B cell (primary cell): ENCODE measurements at regions of chr3 and their contacts with region 1.

Region 1: DNA sequence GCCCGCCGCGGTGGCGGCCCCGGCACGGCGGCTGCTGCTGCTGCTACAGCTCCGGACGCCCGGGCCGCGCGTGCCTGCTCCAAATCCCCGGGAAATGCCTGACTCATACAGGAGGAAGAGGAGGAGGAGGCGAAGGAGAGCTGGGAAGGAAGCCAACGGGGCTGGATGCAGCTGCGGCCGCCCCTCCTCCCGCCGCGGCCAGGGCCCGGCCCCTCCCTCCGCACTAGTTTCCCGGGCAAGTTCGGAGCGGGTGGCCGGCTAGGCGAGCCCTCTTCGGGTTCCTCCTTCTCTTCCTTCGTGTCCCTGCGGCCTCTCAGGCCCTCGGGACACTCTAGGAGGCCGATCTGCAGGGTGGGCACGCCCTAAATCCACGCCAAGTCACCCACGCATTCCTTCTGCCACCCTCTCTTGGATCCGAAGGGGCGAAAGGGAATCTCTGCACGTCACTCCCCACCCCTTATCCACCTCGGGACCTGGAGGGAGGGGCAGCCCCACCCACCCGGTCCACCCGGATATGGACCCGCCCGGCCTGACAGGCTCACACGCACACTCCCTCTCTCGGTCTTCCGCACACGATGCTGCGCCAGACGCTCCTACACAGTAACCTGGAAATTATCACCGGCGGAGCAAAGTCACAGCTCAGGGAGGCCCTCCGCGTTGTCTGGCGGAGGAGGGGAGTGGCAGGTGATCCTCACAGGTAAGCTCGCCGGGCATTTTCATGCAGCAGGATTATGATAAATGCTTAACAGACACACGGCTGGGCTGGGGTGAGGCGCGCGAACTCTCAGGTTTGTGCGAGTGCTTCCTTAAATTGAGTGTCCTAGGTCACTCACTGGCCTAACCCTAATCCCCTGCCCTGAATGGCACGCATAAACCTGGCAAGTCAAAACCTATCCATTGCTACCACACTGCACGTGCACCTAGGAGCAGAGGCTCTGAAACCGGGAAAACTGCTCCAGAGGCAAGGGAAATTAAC is at the starts of genes OSBPL10 and ZNF860:
- DNase-seq: peak; percentile 75
- ATAC-seq: peak; percentile 64
- H3K4me3 ChIP-seq: peak within 1 kb of the TSS; percentile 75 to 95 (median 88)
- H3K4me3 Mint-ChIP-seq: peak within 1 kb of the TSS; percentile 99
- H3K27ac ChIP-seq: peak within 1 kb of the TSS; percentile 70 to 84
- H3K27ac Mint-ChIP-seq: peak within 1 kb of the TSS; percentile 98
- H3K4me1 ChIP-seq: peaks cover 75% of the 10 kb centered on the region in 2 donors
- H3K4me1 Mint-ChIP-seq: peaks cover 78% of the 10 kb centered on the region
- H3K27me3 ChIP-seq: no peaks in the 10 kb centered on the region
- H3K27me3 Mint-ChIP-seq: no peaks in the 10 kb centered on the region
- CTCF ChIP-seq: no peak
- total RNA-seq, gene OSBPL10: 310 and 317 TPM in 2 replicates
- total RNA-seq, gene ZNF860: 41.4 and 45.9 TPM in 2 replicates

Region 2: GRCh38 chr3:31567036-31567435 is 414.5 kb before region 1 on chr3:
- CTCF ChIA-PET with region 1: no interaction called
- POLR2A ChIA-PET with region 1: no interaction called
- intact Hi-C with region 1: no loop called
- DNase-seq: peak; percentile 33
- ATAC-seq: peak; percentile 49
- H3K4me3 ChIP-seq: no peak overlapping the region
- H3K4me3 Mint-ChIP-seq: no peak overlapping the region
- H3K27ac ChIP-seq: no peak overlapping the region
- H3K27ac Mint-ChIP-seq: no peak overlapping the region
- H3K4me1 ChIP-seq: peaks cover 19 to 51% of the 10 kb centered on the region in 2 donors
- H3K4me1 Mint-ChIP-seq: peaks cover 77% of the 10 kb centered on the region
- H3K27me3 ChIP-seq: no peaks in the 10 kb centered on the region
- H3K27me3 Mint-ChIP-seq: no peaks in the 10 kb centered on the region
- CTCF ChIP-seq: peak; percentile 68

Region 3: GRCh38 chr3:31858439-31858838 is 123.1 kb before region 1 on chr3:
- CTCF ChIA-PET with region 1: interaction called, 12 read pairs
- POLR2A ChIA-PET with region 1: no interaction called
- intact Hi-C with region 1: loop called (anchors 1 kb)
- DNase-seq: peak; percentile 48
- ATAC-seq: peak; percentile 66
- H3K4me3 ChIP-seq: no peak overlapping the region
- H3K4me3 Mint-ChIP-seq: no peak overlapping the region
- H3K27ac ChIP-seq: peak overlapping the region in 1 of 2 donors; percentile 34
- H3K27ac Mint-ChIP-seq: peak overlapping the region; percentile 53
- H3K4me1 ChIP-seq: peaks cover 49 to 56% of the 10 kb centered on the region in 2 donors
- H3K4me1 Mint-ChIP-seq: peaks cover 65% of the 10 kb centered on the region
- H3K27me3 ChIP-seq: no peaks in the 10 kb centered on the region
- H3K27me3 Mint-ChIP-seq: no peaks in the 10 kb centered on the region
- CTCF ChIP-seq: peak; percentile 59

Region 4: DNA sequence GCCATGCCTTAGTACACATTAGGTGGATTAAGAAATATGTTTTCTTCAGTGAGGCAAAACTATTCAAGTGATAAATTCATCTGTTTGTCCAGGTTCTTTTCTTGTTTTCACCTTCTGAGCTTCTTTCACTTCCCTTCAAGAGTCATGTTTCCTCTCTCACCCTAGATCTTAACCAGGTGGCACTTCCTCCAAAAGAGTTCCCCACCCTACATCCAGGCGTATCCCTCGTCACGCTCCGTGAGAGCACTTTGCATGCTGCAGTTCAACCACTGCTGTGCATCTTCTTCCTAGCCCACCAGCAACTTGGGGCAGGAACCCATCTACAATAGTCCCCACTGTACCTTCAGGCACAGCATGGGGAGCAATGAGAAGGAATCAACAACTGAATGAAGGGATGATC is 29.3 kb before region 1 on chr3:
- CTCF ChIA-PET with region 1: interaction called, 9 read pairs
- POLR2A ChIA-PET with region 1: interaction called, 8 read pairs
- intact Hi-C with region 1: loop called (anchors 2 kb)
- DNase-seq: peak; percentile 90
- ATAC-seq: peak; percentile 84
- H3K4me3 ChIP-seq: peak overlapping the region in 2 of 5 experiments; percentile 35 to 52
- H3K4me3 Mint-ChIP-seq: peak overlapping the region; percentile 80
- H3K27ac ChIP-seq: peak overlapping the region; percentile 88
- H3K27ac Mint-ChIP-seq: peak overlapping the region; percentile 96
- H3K4me1 ChIP-seq: peaks cover 88 to 90% of the 10 kb centered on the region in 2 donors
- H3K4me1 Mint-ChIP-seq: peaks cover 88% of the 10 kb centered on the region
- H3K27me3 ChIP-seq: no peaks in the 10 kb centered on the region
- H3K27me3 Mint-ChIP-seq: no peaks in the 10 kb centered on the region
- CTCF ChIP-seq: no peak

Region 5: GRCh38 chr3:31999907-32000439 is 18.5 kb after region 1 on chr3:
- CTCF ChIA-PET with region 1: interaction called, 4 read pairs
- POLR2A ChIA-PET with region 1: interaction called, 11 read pairs
- intact Hi-C with region 1: loop called (anchors 2 kb)
- DNase-seq: peak; percentile 27
- ATAC-seq: peak; percentile 88
- H3K4me3 ChIP-seq: peak overlapping the region in 1 of 5 experiments; percentile 1
- H3K4me3 Mint-ChIP-seq: peak overlapping the region; percentile 83
- H3K27ac ChIP-seq: peak overlapping the region; percentile 59 to 85
- H3K27ac Mint-ChIP-seq: peak overlapping the region; percentile 98
- H3K4me1 ChIP-seq: peaks cover 39% of the 10 kb centered on the region in 2 donors
- H3K4me1 Mint-ChIP-seq: peaks cover 66% of the 10 kb centered on the region
- H3K27me3 ChIP-seq: no peaks in the 10 kb centered on the region
- H3K27me3 Mint-ChIP-seq: no peaks in the 10 kb centered on the region
- CTCF ChIP-seq: no peak

Region 6: GRCh38 chr3:32106280-32106928 is 124.9 kb after region 1 on chr3 and contains the start of gene GPD1L:
- CTCF ChIA-PET with region 1: no interaction called
- POLR2A ChIA-PET with region 1: interaction called, 3 read pairs
- intact Hi-C with region 1: loop called (anchors 1 kb)
- DNase-seq: peak; percentile 94
- ATAC-seq: peak; percentile 99
- H3K4me3 ChIP-seq: peak within 1 kb of the TSS; percentile 46 to 79 (median 75)
- H3K4me3 Mint-ChIP-seq: peak within 1 kb of the TSS; percentile 94
- H3K27ac ChIP-seq: no peak within 1 kb of the TSS
- H3K27ac Mint-ChIP-seq: peak within 1 kb of the TSS; percentile 88
- H3K4me1 ChIP-seq: peaks cover 11 to 14% of the 10 kb centered on the region in 2 donors
- H3K4me1 Mint-ChIP-seq: peaks cover 15% of the 10 kb centered on the region
- H3K27me3 ChIP-seq: no peaks in the 10 kb centered on the region
- H3K27me3 Mint-ChIP-seq: no peaks in the 10 kb centered on the region
- CTCF ChIP-seq: no peak
- total RNA-seq, gene GPD1L: 9.3 TPM in 2 replicates